ENCODE measurements at regions of chr7 and their contacts with region 1.

Region 1: GRCh38 chr7:105876091-105876963 is at the start of gene ATXN7L1:
- DNase-seq: peak; percentile 98
- H3K4me3 Mint-ChIP-seq: peak within 1 kb of the TSS; percentile 87
- H3K27ac Mint-ChIP-seq: peak within 1 kb of the TSS; percentile 97
- H3K4me1 Mint-ChIP-seq: peaks cover 5% of the 10 kb centered on the region
- H3K27me3 Mint-ChIP-seq: no peaks in the 10 kb centered on the region
- CTCF ChIP-seq: peak; percentile 50
- total RNA-seq, gene ATXN7L1: 8.1 and 10.0 TPM in 2 replicates

Region 2: DNA sequence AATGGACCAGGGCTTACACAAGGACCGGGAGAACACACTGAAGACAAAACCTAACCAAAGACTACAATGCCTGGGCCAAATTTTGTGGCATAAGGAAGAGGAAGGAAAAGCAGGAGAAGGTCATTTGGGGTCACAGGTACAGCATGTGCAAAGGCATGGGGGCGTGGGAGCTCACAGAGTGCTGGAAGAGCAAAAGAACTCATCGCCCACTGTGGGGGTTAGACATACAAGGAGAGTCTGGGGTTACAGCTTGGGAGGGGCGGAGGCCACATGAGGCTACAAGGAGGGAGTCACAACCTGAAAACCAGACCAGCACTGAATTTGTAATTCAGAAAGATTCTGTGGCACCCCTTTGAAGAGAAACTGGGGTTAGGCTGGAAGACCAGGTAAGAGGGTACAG is 363.9 kb before region 1 on chr7:
- CTCF ChIA-PET with region 1: no interaction called
- POLR2A ChIA-PET with region 1: no interaction called
- intact Hi-C with region 1: no loop called
- DNase-seq: no peak
- H3K4me3 Mint-ChIP-seq: no peak overlapping the region
- H3K27ac Mint-ChIP-seq: no peak overlapping the region
- H3K4me1 Mint-ChIP-seq: peaks cover 9% of the 10 kb centered on the region
- H3K27me3 Mint-ChIP-seq: no peaks in the 10 kb centered on the region
- CTCF ChIP-seq: no peak

Region 3: GRCh38 chr7:105786520-105787468 is 89.5 kb before region 1 on chr7:
- CTCF ChIA-PET with region 1: interaction called, 3 read pairs
- POLR2A ChIA-PET with region 1: no interaction called
- intact Hi-C with region 1: loop called (anchors 5 kb)
- DNase-seq: peak; percentile 87
- H3K4me3 Mint-ChIP-seq: no peak overlapping the region
- H3K27ac Mint-ChIP-seq: no peak overlapping the region
- H3K4me1 Mint-ChIP-seq: peaks cover 8% of the 10 kb centered on the region
- H3K27me3 Mint-ChIP-seq: no peaks in the 10 kb centered on the region
- CTCF ChIP-seq: no peak

Region 4: GRCh38 chr7:105887569-105888189 is 11.4 kb after region 1 on chr7:
- CTCF ChIA-PET with region 1: interaction called, 11 read pairs
- POLR2A ChIA-PET with region 1: interaction called, 4 read pairs
- intact Hi-C with region 1: no loop called
- DNase-seq: peak; percentile 16
- H3K4me3 Mint-ChIP-seq: no peak overlapping the region
- H3K27ac Mint-ChIP-seq: no peak overlapping the region
- H3K4me1 Mint-ChIP-seq: peaks cover 5% of the 10 kb centered on the region
- H3K27me3 Mint-ChIP-seq: no peaks in the 10 kb centered on the region
- CTCF ChIP-seq: no peak

Region 5: DNA sequence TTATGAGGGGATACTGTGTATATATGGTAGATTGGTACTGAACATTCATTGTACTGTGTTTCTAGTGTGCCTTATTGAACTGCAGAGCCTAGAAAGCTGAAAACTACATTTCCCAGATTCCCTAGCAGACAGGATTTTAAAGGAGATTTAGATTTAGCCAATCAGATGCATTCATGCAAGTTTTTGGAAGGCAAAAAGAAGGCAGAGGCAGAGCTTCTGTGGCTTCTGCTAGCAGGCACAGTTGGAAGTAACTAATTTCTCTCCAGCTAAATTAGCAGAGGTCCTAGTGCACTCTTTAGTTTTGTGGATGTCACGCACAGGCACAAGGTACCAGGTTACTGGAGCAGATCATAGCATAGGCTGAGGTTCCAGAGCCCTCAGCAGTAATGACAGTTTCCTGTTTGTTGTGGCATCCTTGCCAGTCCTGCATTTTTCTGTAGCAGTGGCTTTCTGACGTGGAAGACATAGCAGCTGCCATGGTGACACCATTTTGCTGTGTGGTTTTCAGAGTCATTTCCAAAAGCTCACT is 868.3 kb after region 1 on chr7:
- CTCF ChIA-PET with region 1: no interaction called
- POLR2A ChIA-PET with region 1: no interaction called
- intact Hi-C with region 1: no loop called
- DNase-seq: no peak
- H3K4me3 Mint-ChIP-seq: no peak overlapping the region
- H3K27ac Mint-ChIP-seq: no peak overlapping the region
- H3K4me1 Mint-ChIP-seq: no peaks in the 10 kb centered on the region
- H3K27me3 Mint-ChIP-seq: no peaks in the 10 kb centered on the region
- CTCF ChIP-seq: no peak

Measured in MCF 10A (cell line).